ENCODE measurements at regions of chr10 and their contacts with region 1.

Region 1: DNA sequence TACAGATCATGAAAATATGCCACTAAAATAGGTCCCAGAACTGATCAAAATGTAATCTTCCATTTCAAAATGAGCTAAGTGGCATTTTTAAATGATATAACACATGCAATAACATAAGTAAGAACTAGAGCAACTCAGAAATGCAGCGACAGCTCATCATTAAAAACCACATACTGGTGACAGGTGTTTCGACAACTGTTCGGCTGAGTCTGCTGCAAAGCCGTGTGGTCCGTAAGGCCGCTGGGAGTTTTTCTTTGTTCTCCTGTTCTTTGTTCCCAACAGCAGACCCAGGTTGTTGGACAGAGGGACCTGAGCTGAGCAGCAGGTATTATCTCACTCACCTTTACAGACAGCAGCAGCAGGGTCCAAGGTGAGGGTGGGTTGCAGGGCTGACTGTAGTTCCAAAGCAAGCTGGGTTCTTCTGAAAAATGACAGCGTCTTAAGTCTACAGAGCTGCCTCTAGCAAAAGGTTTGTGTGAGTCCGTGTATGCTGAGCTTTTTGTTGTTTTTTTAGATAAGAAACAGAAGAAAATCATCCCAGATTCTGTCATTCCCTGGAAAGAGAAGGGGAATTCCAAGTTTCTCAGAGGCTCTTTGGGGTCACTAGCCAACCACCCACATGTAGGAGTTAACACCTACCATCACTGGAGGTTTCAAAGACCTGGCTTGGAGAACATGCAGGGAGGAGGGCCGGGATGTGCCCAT is 45.4 kb upstream of the MACROH2A2 start:
- DNase-seq: no peak
- H3K4me3 ChIP-seq: no peak overlapping the region
- CTCF ChIP-seq: no peak

Region 2: DNA sequence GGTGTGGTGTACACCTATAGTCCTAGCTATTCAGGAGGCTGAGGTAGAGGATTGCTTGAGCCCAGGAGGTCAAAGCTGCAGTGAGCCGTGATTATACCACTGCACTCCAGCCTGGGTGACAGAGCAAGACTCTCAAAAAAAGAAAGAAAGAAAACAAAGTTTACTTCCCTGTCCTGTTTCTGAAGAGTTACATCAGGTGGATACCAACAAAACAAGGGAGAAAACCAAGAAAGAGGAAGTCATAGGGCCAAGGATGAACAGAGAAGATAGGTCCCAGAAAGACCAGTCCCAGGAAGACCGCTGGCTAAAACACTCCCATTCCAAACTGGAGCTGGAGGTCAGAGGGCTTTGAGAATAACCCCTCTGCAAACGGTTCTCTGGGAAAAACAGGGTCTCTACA is 58.9 kb after region 1 on chr10:
- in situ Hi-C with region 1: loop called (anchors 5 kb)
- DNase-seq: no peak
- H3K4me3 ChIP-seq: no peak overlapping the region
- CTCF ChIP-seq: no peak